ENCODE measurements at regions of chr20 and their contacts with region 1.

Region 1: DNA sequence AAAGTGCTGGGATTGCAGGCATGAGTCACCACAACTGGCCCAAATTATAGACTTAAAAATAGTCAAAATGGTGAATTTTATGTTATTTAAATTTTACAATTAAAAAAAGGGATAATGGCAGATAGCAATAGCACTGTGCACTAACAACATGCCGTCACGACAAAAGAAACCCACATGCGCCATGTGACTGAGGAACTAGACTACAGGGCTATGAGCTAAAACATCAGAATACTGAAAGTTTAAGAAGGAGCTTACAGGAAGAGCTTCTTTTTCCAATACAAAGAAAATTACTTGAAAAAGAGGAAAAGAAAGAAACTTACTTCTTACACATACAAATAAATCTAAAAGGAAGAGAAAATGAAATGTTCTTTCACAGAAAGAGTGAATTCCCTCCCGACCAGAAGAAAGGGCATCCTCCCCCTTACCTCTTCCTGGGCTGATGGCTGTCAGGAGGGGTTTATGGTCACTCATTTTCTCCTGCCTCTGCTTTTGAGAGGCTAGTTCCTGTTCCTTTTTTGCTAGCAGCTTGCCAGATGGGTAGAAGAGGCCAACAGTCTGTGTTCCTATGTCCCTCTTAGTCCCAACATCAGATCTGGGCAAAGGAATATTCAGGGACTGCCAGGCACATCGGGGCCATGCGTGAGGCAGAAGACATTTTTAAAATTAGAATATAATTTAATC is 54.5 kb downstream of the DZANK1 start:
- DNase-seq: no peak
- H3K4me3 Mint-ChIP-seq: no peak overlapping the region
- H3K27ac Mint-ChIP-seq: no peak overlapping the region
- H3K4me1 Mint-ChIP-seq: no peaks in the 10 kb centered on the region
- H3K27me3 Mint-ChIP-seq: no peaks in the 10 kb centered on the region
- CTCF ChIP-seq: no peak

Region 2: DNA sequence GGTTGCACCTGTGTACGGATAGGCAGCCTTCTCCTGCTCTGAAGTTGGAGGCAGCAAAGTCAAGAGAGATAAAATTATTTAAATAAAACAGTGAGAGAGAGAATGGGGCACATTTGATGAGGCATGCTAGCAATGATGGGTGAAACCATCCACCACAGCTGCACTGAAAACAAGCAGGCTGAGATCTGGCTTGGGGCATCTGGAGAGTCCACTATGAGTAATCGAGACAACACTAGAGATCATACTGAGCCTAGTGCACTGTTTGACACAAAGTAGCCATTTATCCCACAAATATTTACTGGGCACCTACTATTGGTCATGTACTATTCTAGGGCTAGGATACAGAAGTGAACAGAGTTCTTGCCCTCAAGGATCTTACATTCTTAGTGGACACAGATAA is 11.9 kb before region 1 on chr20:
- CTCF ChIA-PET with region 1: interaction called, 11 read pairs
- POLR2A ChIA-PET with region 1: no interaction called
- intact Hi-C with region 1: no loop called
- DNase-seq: no peak
- H3K4me3 Mint-ChIP-seq: no peak overlapping the region
- H3K27ac Mint-ChIP-seq: no peak overlapping the region
- H3K4me1 Mint-ChIP-seq: peaks cover 6% of the 10 kb centered on the region
- H3K27me3 Mint-ChIP-seq: no peaks in the 10 kb centered on the region
- CTCF ChIP-seq: no peak

Region 3: GRCh38 chr20:18428490-18429173 is 16.3 kb after region 1 on chr20:
- CTCF ChIA-PET with region 1: interaction called, 11 read pairs
- POLR2A ChIA-PET with region 1: no interaction called
- intact Hi-C with region 1: no loop called
- DNase-seq: peak; percentile 80
- H3K4me3 Mint-ChIP-seq: no peak overlapping the region
- H3K27ac Mint-ChIP-seq: no peak overlapping the region
- H3K4me1 Mint-ChIP-seq: peaks cover 11% of the 10 kb centered on the region
- H3K27me3 Mint-ChIP-seq: no peaks in the 10 kb centered on the region
- CTCF ChIP-seq: no peak

Region 4: DNA sequence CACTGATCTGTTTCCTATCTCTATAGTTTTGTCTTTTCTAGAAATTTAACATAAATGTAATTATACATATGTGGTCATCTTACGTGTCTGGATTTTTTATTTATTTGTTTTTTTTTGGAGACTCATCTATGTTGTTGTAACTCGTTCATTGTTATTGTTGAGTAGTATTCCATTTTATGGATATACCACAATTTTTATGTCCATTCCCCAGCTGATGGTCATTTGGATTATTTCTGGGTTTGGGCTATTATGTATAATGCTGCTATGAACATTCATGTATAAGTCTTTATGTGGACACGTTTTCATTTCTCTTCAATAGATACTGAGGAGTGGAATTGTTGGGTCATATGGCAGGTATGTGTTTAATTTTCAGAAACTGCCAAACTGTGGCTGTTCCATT is 44.2 kb after region 1 on chr20:
- CTCF ChIA-PET with region 1: interaction called, 10 read pairs
- POLR2A ChIA-PET with region 1: no interaction called
- intact Hi-C with region 1: no loop called
- DNase-seq: no peak
- H3K4me3 Mint-ChIP-seq: no peak overlapping the region
- H3K27ac Mint-ChIP-seq: no peak overlapping the region
- H3K4me1 Mint-ChIP-seq: no peaks in the 10 kb centered on the region
- H3K27me3 Mint-ChIP-seq: no peaks in the 10 kb centered on the region
- CTCF ChIP-seq: no peak